ENCODE measurements at regions of chr18 and their contacts with region 1.

Region 1: GRCh38 chr18:7221424-7222155 is 9.3 kb upstream of the LRRC30 start:
- DNase-seq: no peak
- ATAC-seq: no peak
- H3K4me3 ChIP-seq: no peak overlapping the region
- H3K4me3 Mint-ChIP-seq: no peak overlapping the region
- H3K27ac ChIP-seq: no peak overlapping the region
- H3K27ac Mint-ChIP-seq: no peak overlapping the region
- H3K4me1 ChIP-seq: no peaks in the 10 kb centered on the region
- H3K4me1 Mint-ChIP-seq: no peaks in the 10 kb centered on the region
- H3K27me3 ChIP-seq: no peaks in the 10 kb centered on the region
- H3K27me3 Mint-ChIP-seq: peaks cover 0 to 5% (median 0%) of the 10 kb centered on the region in 5 donors

Region 2: GRCh38 chr18:7349181-7349837 is 127.7 kb after region 1 on chr18:
- CTCF ChIA-PET with region 1: no interaction called
- POLR2A ChIA-PET with region 1: no interaction called
- intact Hi-C with region 1: no loop called
- DNase-seq: no peak
- ATAC-seq: no peak
- H3K4me3 ChIP-seq: no peak overlapping the region
- H3K4me3 Mint-ChIP-seq: no peak overlapping the region
- H3K27ac ChIP-seq: no peak overlapping the region
- H3K27ac Mint-ChIP-seq: no peak overlapping the region
- H3K4me1 ChIP-seq: no peaks in the 10 kb centered on the region
- H3K4me1 Mint-ChIP-seq: no peaks in the 10 kb centered on the region
- H3K27me3 ChIP-seq: no peaks in the 10 kb centered on the region
- H3K27me3 Mint-ChIP-seq: no peaks in the 10 kb centered on the region

Region 3: GRCh38 chr18:7566567-7567473 is 345.2 kb after region 1 on chr18 and contains the start of gene PTPRM:
- CTCF ChIA-PET with region 1: no interaction called
- POLR2A ChIA-PET with region 1: no interaction called
- intact Hi-C with region 1: loop called in 1 of 2 experiments (anchors 2 kb)
- DNase-seq: peak in 7 of 9 donors; percentile 22 to 75 (median 39)
- ATAC-seq: peak; percentile 88
- H3K4me3 ChIP-seq: no peak within 1 kb of the TSS
- H3K4me3 Mint-ChIP-seq: peak within 1 kb of the TSS in 8 of 10 donors; percentile 12 to 64 (median 35)
- H3K27ac ChIP-seq: no peak within 1 kb of the TSS
- H3K27ac Mint-ChIP-seq: no peak within 1 kb of the TSS
- H3K4me1 ChIP-seq: no peaks in the 10 kb centered on the region
- H3K4me1 Mint-ChIP-seq: peaks cover 0 to 14% (median 5%) of the 10 kb centered on the region in 7 donors
- H3K27me3 ChIP-seq: peaks cover 0 to 3% of the 10 kb centered on the region in 2 donors
- H3K27me3 Mint-ChIP-seq: peaks cover 53 to 58% (median 56%) of the 10 kb centered on the region in 5 donors
- total RNA-seq, gene PTPRM: 8.2 to 21.2 (median 8.5) TPM

Measured in naive thymus-derived CD4-positive, alpha-beta T cell (primary cell).